Activated CD4-positive, alpha-beta T cell treated with anti-CD3 and anti-CD28 coated beads, Interleukin-2, amount 10 ng/mL, durations not matched to agents 7 days and 5 days (primary cell): ENCODE measurements at regions of chr11 and their contacts with region 1.

Region 1: DNA sequence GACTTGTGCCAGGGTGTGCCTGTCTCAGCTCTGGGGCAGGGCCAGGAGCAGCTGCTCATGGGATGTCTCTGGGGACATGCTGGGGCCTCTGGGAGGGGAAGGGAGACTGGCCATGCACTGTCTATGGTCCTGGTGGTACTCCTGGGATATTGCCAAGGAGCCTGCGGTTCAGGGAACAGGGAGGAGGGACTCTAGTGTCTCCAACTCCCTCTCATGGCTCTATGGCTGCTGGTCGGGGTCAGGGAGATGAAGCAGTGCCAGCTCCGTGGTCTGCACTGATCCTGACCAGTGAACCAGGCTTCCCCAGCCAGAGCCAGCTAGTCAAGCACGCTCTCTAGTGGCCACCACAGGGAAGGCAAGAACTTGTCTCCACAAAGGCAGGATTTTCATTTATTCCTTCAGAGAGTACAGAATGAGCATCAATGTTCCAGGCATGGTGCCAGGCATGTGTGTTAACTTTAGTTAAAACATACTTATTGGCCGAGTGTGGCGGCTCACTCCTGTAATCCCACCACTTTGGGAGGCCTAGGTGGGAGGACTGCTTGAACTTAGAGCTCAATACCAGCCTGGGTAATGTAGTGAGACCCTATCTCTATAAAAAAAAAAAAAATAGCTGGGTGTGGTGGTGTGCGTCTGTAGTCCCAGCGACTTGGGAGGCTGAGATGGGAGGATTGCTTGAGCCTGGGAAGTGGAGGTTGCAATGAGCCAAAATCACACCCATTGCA is 2.5 kb upstream of the BEST1 start:
- DNase-seq: peak; percentile 75
- H3K4me3 Mint-ChIP-seq: no peak overlapping the region
- H3K27ac Mint-ChIP-seq: no peak overlapping the region
- H3K4me1 Mint-ChIP-seq: no peaks in the 10 kb centered on the region
- H3K27me3 Mint-ChIP-seq: peaks cover 6% of the 10 kb centered on the region

Region 2: GRCh38 chr11:61841636-61842527 is 105.8 kb before region 1 on chr11:
- CTCF ChIA-PET with region 1: no interaction called
- POLR2A ChIA-PET with region 1: no interaction called
- DNase-seq: no peak
- H3K4me3 Mint-ChIP-seq: no peak overlapping the region
- H3K27ac Mint-ChIP-seq: no peak overlapping the region
- H3K4me1 Mint-ChIP-seq: peaks cover 1% of the 10 kb centered on the region
- H3K27me3 Mint-ChIP-seq: no peaks in the 10 kb centered on the region

Region 3: GRCh38 chr11:61899146-61899841 is 48.4 kb before region 1 on chr11:
- CTCF ChIA-PET with region 1: interaction called, 41 read pairs
- POLR2A ChIA-PET with region 1: no interaction called
- DNase-seq: peak; percentile 92
- H3K4me3 Mint-ChIP-seq: no peak overlapping the region
- H3K27ac Mint-ChIP-seq: peak overlapping the region; percentile 43
- H3K4me1 Mint-ChIP-seq: peaks cover 6% of the 10 kb centered on the region
- H3K27me3 Mint-ChIP-seq: no peaks in the 10 kb centered on the region

Region 4: DNA sequence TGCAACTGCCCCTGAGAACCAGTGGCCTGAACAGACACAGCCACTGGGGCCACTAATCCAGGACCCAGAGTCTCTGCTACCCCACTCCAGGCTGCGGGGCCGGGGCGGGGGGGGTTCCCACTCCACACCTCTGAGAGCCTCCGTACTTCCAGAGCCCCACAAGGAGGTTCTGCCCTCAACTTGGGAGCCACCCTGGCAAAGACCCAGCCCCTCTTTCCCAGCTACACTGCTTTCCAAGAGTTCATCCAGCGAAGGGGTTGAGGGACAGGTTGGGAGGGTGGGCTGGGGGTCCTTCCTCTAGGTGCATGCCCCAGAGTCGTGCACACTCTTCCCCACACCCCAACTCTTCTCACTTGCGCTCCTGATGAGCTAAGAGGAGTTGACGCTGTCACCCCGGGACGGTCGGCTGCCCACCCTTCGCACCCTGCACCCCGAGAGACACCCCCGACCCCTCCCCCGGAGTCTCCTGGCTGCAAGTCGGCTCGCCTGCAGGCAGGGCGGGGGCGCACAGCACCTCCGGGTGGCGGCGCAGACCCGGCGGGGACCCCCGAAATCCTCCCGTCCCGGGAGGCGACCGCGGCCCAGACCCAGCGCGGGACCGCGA is 30.8 kb before region 1 on chr11:
- CTCF ChIA-PET with region 1: no interaction called
- POLR2A ChIA-PET with region 1: no interaction called
- DNase-seq: no peak
- H3K4me3 Mint-ChIP-seq: no peak overlapping the region
- H3K27ac Mint-ChIP-seq: no peak overlapping the region
- H3K4me1 Mint-ChIP-seq: peaks cover 9% of the 10 kb centered on the region
- H3K27me3 Mint-ChIP-seq: peaks cover 41% of the 10 kb centered on the region

Region 5: DNA sequence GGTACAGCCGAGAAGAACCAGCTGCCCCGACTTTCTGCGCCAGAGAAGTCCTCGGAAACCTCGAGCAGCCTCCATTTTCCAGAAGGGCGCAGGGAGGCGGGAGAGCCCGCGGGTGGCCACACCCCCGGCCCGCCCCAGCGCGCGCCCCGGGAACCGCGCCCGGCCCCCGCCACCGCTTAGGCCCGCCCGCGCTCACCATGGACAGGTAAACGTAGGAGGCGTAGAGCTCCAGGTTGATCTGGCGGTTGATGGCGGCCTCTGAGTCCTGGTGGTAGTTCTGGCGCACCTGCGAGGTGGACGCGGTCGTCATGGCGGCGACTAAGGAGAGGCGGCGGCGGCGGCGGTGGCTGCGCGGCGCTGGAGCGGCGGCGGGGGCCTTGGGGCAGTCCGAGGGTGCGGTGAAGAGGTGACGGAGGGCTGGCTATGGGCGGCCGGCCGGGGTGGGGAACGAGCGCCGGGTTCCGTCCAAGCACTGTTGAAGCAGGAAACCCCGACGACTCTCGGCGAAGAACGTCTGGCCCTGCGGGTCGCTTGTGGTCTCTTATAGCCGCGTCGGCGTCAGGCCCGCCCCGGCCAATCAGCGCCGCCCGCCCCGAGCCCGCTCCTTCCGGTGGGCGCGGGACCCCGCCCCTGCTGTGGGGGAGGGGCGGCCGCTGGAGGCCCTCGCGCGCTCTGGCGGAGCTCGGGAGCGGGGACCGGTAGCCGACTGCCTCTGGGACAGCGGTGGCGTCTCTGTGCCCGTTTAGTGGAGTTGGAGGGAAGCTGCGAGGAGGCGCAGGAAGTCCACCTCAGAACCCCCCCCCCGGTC is 19.7 kb after region 1 on chr11 and contains the start of gene FTH1:
- CTCF ChIA-PET with region 1: interaction called, 12 read pairs
- POLR2A ChIA-PET with region 1: no interaction called
- DNase-seq: peak; percentile 88
- H3K4me3 Mint-ChIP-seq: peak within 1 kb of the TSS; percentile 94
- H3K27ac Mint-ChIP-seq: peak within 1 kb of the TSS; percentile 98
- H3K4me1 Mint-ChIP-seq: peaks cover 64% of the 10 kb centered on the region
- H3K27me3 Mint-ChIP-seq: no peaks in the 10 kb centered on the region
- total RNA-seq, gene FTH1: 751 to 840 TPM

Region 6: GRCh38 chr11:62001450-62002191 is 54.0 kb after region 1 on chr11:
- CTCF ChIA-PET with region 1: no interaction called
- POLR2A ChIA-PET with region 1: no interaction called
- DNase-seq: no peak
- H3K4me3 Mint-ChIP-seq: no peak overlapping the region
- H3K27ac Mint-ChIP-seq: no peak overlapping the region
- H3K4me1 Mint-ChIP-seq: no peaks in the 10 kb centered on the region
- H3K27me3 Mint-ChIP-seq: no peaks in the 10 kb centered on the region

Region 7: GRCh38 chr11:62013591-62014476 is 66.2 kb after region 1 on chr11:
- CTCF ChIA-PET with region 1: no interaction called
- POLR2A ChIA-PET with region 1: no interaction called
- DNase-seq: no peak
- H3K4me3 Mint-ChIP-seq: no peak overlapping the region
- H3K27ac Mint-ChIP-seq: no peak overlapping the region
- H3K4me1 Mint-ChIP-seq: peaks cover 9% of the 10 kb centered on the region
- H3K27me3 Mint-ChIP-seq: no peaks in the 10 kb centered on the region